Testis (tissue), 5 donors: ENCODE measurements at regions of chr11 and their contacts with region 1.

Region 1: GRCh38 chr11:110948112-110948511 is 235.9 kb upstream of the ARHGAP20 start:
- DNase-seq: peak; percentile 32
- H3K4me3 ChIP-seq: no peak overlapping the region
- H3K27ac ChIP-seq: peak overlapping the region in 1 of 2 donors; percentile 75
- H3K4me1 ChIP-seq: peaks cover 18% of the 10 kb centered on the region
- H3K27me3 ChIP-seq: no peaks in the 10 kb centered on the region
- CTCF ChIP-seq: no peak
- POLR2A ChIP-seq: no peak

Region 2: GRCh38 chr11:110573411-110573810 is 374.7 kb before region 1 on chr11:
- intact Hi-C with region 1: no loop called
- DNase-seq: no peak
- H3K4me3 ChIP-seq: no peak overlapping the region
- H3K27ac ChIP-seq: no peak overlapping the region
- H3K4me1 ChIP-seq: no peaks in the 10 kb centered on the region
- H3K27me3 ChIP-seq: no peaks in the 10 kb centered on the region
- CTCF ChIP-seq: no peak
- POLR2A ChIP-seq: no peak

Region 3: GRCh38 chr11:110711776-110712658 is 236.1 kb before region 1 on chr11 and contains the start of gene ARHGAP20:
- intact Hi-C with region 1: loop called (anchors 5 kb)
- DNase-seq: peak; percentile 89
- H3K4me3 ChIP-seq: peak within 1 kb of the TSS; percentile 72 to 98
- H3K27ac ChIP-seq: peak within 1 kb of the TSS; percentile 87 to 96
- H3K4me1 ChIP-seq: peaks cover 12% of the 10 kb centered on the region
- H3K27me3 ChIP-seq: no peaks in the 10 kb centered on the region
- CTCF ChIP-seq: peak in 2 of 3 experiments; percentile 8 to 23
- POLR2A ChIP-seq: no peak
- total RNA-seq, gene ARHGAP20: 37.2 to 40.1 TPM